ENCODE measurements at regions of chr6 and their contacts with region 1.

Region 1: DNA sequence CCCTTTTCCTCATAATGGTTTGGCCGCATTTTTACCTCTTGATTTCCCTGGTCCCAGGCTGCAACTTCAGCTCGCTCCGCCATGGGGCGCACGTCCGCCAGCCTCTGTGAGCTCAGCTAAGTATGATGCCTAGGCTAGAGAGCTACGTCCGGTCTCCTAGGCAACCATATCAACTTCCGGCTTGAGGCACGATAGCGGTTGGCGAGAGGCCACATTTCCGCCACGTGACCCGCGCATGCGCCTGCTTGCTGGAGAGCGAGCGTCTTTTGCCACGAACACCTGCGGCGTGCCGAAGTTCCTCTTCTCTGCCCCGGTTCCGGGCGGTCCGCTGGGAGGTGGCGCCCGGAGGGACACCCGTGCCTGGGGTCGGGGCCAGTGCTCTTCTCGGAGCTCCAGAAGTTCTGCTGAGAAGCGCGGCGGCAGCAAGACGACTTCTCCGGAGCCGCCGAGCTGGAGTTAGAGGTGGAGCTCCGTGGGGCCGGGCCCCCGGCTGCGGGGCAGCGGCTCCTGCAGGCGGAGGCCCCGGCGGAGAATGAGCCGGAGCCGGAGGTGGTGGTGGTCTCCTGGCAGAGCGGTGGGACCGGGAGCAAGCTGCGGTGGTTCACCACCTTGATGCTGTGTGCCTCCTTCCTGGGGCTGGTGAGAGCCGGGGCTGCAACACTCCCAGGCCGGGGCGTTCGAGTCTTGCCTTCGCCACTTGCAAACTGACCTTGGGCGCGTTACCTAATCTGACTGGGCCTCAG is 172.0 kb downstream of the SLC16A10 start:
- DNase-seq: peak; percentile 100
- H3K4me3 ChIP-seq: peak overlapping the region; percentile 45 to 76 (median 64)
- H3K4me3 Mint-ChIP-seq: peak overlapping the region; percentile 74 to 76
- H3K27ac ChIP-seq: peak overlapping the region; percentile 84 to 97
- H3K27ac Mint-ChIP-seq: peak overlapping the region; percentile 84 to 91 (median 88)
- H3K4me1 ChIP-seq: peaks cover 18 to 22% of the 10 kb centered on the region in 2 donors
- H3K4me1 Mint-ChIP-seq: peaks cover 22% of the 10 kb centered on the region
- H3K27me3 ChIP-seq: no peaks in the 10 kb centered on the region
- H3K27me3 Mint-ChIP-seq: peaks cover 6 to 10% (median 8%) of the 10 kb centered on the region in 3 donors
- CTCF ChIP-seq: peak; percentile 89

Region 2: GRCh38 chr6:111456208-111456607 is 196.9 kb after region 1 on chr6:
- intact Hi-C with region 1: no loop called
- DNase-seq: no peak
- H3K4me3 ChIP-seq: no peak overlapping the region
- H3K4me3 Mint-ChIP-seq: no peak overlapping the region
- H3K27ac ChIP-seq: no peak overlapping the region
- H3K27ac Mint-ChIP-seq: no peak overlapping the region
- H3K4me1 ChIP-seq: no peaks in the 10 kb centered on the region
- H3K4me1 Mint-ChIP-seq: no peaks in the 10 kb centered on the region
- H3K27me3 ChIP-seq: no peaks in the 10 kb centered on the region
- H3K27me3 Mint-ChIP-seq: no peaks in the 10 kb centered on the region
- CTCF ChIP-seq: no peak

Region 3: GRCh38 chr6:111605100-111605751 is 346.0 kb after region 1 on chr6:
- intact Hi-C with region 1: loop called in 1 of 2 experiments (anchors 10 kb)
- DNase-seq: peak; percentile 72 to 85 (median 81)
- H3K4me3 ChIP-seq: peak overlapping the region; percentile 42 to 87 (median 81)
- H3K4me3 Mint-ChIP-seq: peak overlapping the region; percentile 89 to 98
- H3K27ac ChIP-seq: peak overlapping the region; percentile 85 to 96
- H3K27ac Mint-ChIP-seq: peak overlapping the region; percentile 93 to 99 (median 98)
- H3K4me1 ChIP-seq: peaks cover 47 to 50% of the 10 kb centered on the region in 2 donors
- H3K4me1 Mint-ChIP-seq: peaks cover 53% of the 10 kb centered on the region
- H3K27me3 ChIP-seq: no peaks in the 10 kb centered on the region
- H3K27me3 Mint-ChIP-seq: peaks cover 0 to 2% (median 0%) of the 10 kb centered on the region in 3 donors
- CTCF ChIP-seq: no peak

Region 4: GRCh38 chr6:111657146-111657545 is 397.9 kb after region 1 on chr6:
- intact Hi-C with region 1: loop called in 1 of 2 experiments (anchors 10 kb)
- DNase-seq: peak; percentile 25 to 68 (median 65)
- H3K4me3 ChIP-seq: no peak overlapping the region
- H3K4me3 Mint-ChIP-seq: no peak overlapping the region
- H3K27ac ChIP-seq: peak overlapping the region in 1 of 2 donors; percentile 30
- H3K27ac Mint-ChIP-seq: peak overlapping the region in 6 of 7 donors; percentile 29 to 61 (median 50)
- H3K4me1 ChIP-seq: peaks cover 5 to 7% of the 10 kb centered on the region in 2 donors
- H3K4me1 Mint-ChIP-seq: peaks cover 7% of the 10 kb centered on the region
- H3K27me3 ChIP-seq: no peaks in the 10 kb centered on the region
- H3K27me3 Mint-ChIP-seq: no peaks in the 10 kb centered on the region
- CTCF ChIP-seq: no peak